Astrocyte of the cerebellum (primary cell): ENCODE measurements at regions of chr5 and their contacts with region 1.

Region 1: GRCh38 chr5:126433701-126434100 is 10.5 kb downstream of the GRAMD2B start:
- DNase-seq: peak; percentile 72
- H3K4me3 ChIP-seq: no peak overlapping the region
- CTCF ChIP-seq: no peak

Region 2: DNA sequence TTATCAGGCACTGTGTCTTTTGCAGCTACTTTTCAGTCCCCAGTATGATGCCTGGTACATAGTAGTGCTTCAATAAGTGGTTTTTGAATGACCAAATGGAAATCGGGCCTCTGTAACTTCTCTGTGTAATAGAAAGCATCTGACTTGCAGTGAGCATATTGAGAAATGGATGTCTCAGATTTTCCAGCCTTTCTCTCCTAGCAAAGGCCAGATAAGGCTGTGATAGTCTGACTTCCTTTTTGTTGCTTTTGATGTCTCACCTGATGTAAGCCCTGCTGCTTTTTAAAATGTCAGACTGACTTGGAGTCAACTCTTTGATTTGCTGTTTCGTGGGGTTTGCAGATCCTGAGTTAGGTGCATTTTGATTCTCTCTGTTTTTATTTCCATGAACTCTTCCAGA is 1097.3 kb before region 1 on chr5:
- in situ Hi-C with region 1: no loop called
- DNase-seq: no peak
- H3K4me3 ChIP-seq: no peak overlapping the region
- CTCF ChIP-seq: no peak

Region 3: DNA sequence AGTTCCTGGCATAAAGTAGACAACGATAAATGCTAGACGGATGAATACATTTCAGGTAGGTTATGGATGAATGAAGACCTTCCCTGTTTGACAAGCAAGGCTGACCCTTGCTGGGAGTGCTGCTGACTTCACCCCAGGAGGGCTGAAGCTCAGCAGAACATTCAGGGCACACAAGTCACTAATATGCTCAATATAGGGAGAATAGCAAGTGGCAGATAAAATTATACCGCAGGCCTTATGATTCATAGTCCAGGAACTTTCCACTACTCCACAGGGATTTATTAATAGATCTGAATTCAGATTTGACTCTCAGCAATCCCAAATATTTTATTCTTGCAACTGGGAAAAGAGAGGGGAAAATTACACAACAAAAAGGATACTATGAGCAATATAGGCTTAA is 48.7 kb before region 1 on chr5:
- in situ Hi-C with region 1: loop called (anchors 5 kb)
- DNase-seq: peak; percentile 75
- H3K4me3 ChIP-seq: no peak overlapping the region
- CTCF ChIP-seq: no peak

Region 4: GRCh38 chr5:126483156-126483555 is 49.5 kb after region 1 on chr5:
- in situ Hi-C with region 1: loop called (anchors 5 kb)
- DNase-seq: no peak
- H3K4me3 ChIP-seq: no peak overlapping the region
- CTCF ChIP-seq: no peak

Region 5: GRCh38 chr5:126531543-126532120 is 97.9 kb after region 1 on chr5:
- in situ Hi-C with region 1: loop called (anchors 5 kb)
- DNase-seq: no peak
- H3K4me3 ChIP-seq: no peak overlapping the region
- CTCF ChIP-seq: no peak

Region 6: DNA sequence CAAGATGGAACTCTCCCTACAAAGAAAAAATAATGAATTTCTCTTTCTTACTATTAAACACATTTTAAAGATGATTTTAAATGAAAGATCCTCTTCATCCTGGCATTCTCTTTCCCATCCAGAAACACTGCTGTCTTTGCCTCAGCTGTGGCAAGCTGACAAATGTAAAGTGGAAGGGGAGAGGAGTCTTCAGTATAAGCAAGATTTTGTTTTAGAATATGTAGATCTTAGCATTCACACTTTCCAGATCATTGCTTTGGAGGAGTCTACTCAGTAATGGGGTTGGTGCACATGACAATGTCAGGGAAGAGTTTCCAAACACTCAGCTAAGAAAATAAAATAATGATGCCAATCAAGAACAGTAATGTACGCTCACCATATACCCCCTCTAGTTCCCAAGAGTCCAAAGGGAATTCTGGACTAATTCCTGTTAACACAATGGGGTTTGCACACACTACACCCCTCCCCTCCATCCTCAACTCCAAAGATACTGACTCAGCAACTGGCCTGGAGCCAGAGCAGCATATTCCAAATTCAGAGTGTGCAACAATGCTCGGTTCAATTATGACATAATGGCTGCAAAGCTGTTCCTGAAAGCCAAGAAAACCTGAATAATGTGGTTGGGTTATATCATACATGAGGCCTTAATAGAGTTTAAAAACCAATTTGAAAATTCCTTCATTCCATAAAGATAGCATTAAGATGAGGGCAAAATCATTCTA is 635.0 kb after region 1 on chr5:
- in situ Hi-C with region 1: no loop called
- DNase-seq: peak; percentile 80
- H3K4me3 ChIP-seq: no peak overlapping the region
- CTCF ChIP-seq: no peak